BJ (cell line): ENCODE measurements at regions of chr5 and their contacts with region 1.

Region 1: DNA sequence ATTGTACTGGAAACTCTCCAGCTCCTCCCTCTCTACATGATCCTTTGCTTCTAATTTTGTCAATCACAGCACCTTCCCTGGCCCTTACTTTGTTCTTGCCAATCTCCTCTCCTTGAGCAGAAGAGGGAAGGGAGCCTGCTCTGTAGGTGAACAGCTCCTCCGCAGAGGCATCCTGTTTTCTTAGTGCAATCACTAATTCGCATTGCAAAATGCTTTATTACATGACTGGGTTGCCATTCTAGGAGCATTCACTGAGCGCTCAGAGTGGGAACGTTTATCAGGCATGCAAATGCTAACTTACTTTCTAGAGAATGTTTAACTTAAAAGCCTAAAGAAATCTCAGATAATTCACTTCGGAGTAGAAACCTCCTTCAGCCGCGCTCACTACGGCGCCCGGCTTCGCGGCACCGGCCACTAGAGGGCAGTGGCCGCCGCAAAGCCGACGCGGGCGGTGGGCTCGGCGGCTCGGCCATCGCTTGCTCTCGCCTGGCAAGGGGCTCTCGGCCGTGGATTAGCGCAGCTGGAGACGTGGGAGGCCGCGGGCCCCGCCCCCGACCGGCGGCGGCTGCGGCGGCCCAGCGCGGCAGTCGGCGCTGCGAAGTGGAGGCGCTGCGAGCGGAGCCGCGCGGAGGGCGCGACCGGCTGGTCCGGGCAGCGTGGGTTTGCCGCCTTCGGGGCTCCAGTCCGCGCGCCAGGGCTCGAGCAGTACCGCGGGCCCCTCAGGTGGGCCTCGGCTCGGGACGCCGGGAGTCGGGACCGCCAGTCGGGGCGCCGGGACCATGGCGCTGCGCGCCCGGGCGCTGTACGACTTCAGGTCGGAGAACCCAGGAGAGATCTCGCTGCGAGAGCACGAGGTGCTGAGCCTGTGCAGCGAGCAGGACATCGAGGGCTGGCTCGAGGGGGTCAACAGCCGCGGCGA is at the start of gene SNX18:
- DNase-seq: peak; percentile 37
- H3K4me3 ChIP-seq: peak within 1 kb of the TSS; percentile 65
- H3K27me3 ChIP-seq: no peaks in the 10 kb centered on the region
- CTCF ChIP-seq: peak; percentile 75
- polyA plus RNA-seq, gene SNX18: 33.3 and 47.0 TPM in 2 replicates

Region 2: DNA sequence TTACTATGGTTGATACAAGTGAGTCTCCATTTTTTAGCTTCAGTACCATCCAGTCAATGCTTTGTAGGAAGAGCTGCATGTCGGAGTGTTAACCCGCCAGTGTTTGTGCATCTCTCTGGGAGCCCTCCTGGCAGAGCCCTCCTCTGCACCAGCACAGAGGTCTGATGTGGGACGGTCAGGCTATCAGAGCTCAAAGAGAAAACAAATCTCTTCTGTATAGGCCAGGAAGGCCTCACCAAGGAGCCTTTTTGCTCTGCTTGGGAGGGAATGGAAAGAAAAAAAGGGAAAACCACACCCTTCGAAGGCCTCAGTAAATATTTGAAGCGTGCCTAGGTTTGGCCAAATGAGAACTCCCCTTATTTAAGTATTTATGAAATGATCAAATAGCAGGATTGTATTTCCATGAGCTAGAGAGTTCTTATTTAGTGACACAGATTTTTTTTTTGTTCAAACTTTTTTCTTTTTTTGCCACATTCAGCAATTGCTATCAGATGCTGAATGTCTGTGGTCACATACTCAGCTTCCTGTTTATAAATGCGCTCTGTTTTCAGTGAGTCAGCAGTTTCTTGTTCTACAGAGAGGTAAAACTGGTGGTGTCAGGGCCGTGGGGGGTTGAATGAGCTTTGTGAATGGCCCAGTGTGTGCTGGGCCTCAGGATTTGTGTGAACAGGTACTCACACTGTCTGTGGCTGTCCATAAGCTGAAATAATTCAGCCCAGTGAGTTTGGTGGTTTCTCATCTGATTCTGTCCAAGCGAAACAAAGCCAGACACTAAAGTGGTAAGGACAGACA is 226.8 kb after region 1 on chr5:
- CTCF ChIA-PET with region 1: interaction called, 19 read pairs
- POLR2A ChIA-PET with region 1: no interaction called
- DNase-seq: peak; percentile 98
- H3K4me3 ChIP-seq: no peak overlapping the region
- H3K27me3 ChIP-seq: no peaks in the 10 kb centered on the region
- CTCF ChIP-seq: no peak

Region 3: DNA sequence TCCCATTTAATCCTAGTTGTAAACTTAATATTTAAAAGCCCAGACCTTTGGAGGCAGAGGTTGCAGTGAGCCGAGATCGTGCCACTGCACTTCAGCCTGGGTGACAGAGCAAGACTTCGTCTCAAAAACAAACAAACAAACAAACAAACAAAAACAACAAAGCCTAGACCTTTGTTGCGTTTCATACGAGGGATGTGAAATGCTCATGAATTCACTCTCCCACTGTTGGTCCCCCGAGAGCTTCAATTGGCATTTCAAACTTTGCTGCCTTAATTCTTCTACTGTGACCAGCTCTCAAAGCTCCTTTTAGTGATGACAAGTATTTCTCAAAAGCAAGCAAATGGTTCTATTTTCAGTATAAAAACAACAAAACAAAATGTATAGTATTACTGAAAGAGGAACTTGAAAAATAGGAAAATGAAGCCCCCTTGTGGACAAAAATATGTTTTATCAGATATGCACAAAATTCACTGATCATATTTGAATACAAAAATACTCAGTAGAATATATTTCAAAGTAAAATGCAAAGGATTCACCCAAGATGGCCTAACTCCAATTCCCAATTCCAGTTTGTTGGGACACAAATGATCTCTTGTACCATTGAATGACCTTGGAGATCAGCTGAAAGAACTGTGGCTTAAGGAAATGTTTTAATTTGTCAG is 327.6 kb after region 1 on chr5:
- CTCF ChIA-PET with region 1: interaction called, 82 read pairs
- POLR2A ChIA-PET with region 1: no interaction called
- DNase-seq: no peak
- H3K4me3 ChIP-seq: no peak overlapping the region
- H3K27me3 ChIP-seq: no peaks in the 10 kb centered on the region
- CTCF ChIP-seq: peak; percentile 29; the same call in 1 of the 2 replicates

Region 4: GRCh38 chr5:54874373-54874921 is 357.0 kb after region 1 on chr5:
- CTCF ChIA-PET with region 1: interaction called, 36 read pairs
- POLR2A ChIA-PET with region 1: no interaction called
- DNase-seq: no peak
- H3K4me3 ChIP-seq: no peak overlapping the region
- H3K27me3 ChIP-seq: peaks cover 3% of the 10 kb centered on the region; the same call in 1 of the 2 replicates
- CTCF ChIP-seq: no peak

Region 5: GRCh38 chr5:54895816-54896341 is 378.4 kb after region 1 on chr5:
- CTCF ChIA-PET with region 1: interaction called, 35 read pairs
- POLR2A ChIA-PET with region 1: no interaction called
- DNase-seq: no peak
- H3K4me3 ChIP-seq: no peak overlapping the region
- H3K27me3 ChIP-seq: peaks cover 2% of the 10 kb centered on the region; the same call in 1 of the 2 replicates
- CTCF ChIP-seq: peak; percentile 72